Heart left ventricle (tissue), 16 donors: ENCODE measurements at regions of chr6 and their contacts with region 1.

Region 1: GRCh38 chr6:144013486-144013909 is 5.4 kb upstream of the PLAGL1 start:
- DNase-seq: peak; percentile 67 to 80 (median 72)
- ATAC-seq: peak in 3 of 4 donors; percentile 36 to 64 (median 54)
- H3K4me3 ChIP-seq: no peak overlapping the region
- H3K27ac ChIP-seq: no peak overlapping the region
- H3K4me1 ChIP-seq: peaks cover 0 to 7% (median 0%) of the 10 kb centered on the region in 12 donors
- H3K27me3 ChIP-seq: peaks cover 0 to 4% (median 0%) of the 10 kb centered on the region in 9 donors
- CTCF ChIP-seq: peak; percentile 87 to 98 (median 92)
- POLR2A ChIP-seq: no peak

Region 2: DNA sequence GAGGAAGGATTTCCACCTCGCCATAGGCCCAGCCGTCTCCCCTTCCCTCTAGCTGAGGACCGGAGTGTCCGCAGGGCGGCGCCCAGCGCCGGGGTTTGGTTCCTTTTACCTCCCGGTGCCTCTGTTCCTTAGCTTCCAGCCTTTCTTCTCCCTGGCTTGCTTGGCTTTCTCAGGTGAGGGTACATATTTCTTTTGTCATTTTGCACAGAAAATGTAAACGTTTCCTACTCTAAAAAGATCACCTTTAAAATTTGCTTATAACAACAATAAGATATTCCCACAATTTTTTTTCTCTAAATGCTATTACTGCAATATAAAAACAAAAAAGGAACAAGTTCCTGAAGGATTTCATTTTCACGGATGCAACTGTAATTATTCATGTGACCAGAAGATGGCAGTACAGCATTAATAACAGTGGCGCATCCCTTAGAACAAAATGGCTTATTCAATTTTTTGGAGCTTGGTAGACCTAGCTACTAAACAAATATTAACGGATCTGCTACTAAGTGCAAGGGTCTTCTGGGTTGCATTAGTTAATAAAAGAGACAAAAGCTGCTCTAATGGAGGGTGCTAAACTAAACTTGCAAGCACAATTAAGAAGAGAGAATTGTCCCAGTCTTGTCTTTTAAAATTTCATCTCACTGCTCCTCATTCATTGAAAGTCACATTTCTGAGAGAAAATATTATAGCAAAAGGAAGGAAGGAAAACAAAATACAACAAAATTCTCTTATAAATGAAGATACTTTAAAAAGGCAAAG is 1538.8 kb before region 1 on chr6:
- intact Hi-C with region 1: loop called in 2 of 10 experiments (anchors 10 kb)
- DNase-seq: peak in 1 of 5 donors; percentile 51
- ATAC-seq: no peak
- H3K4me3 ChIP-seq: no peak overlapping the region
- H3K27ac ChIP-seq: no peak overlapping the region
- H3K4me1 ChIP-seq: peaks cover 0 to 7% (median 0%) of the 10 kb centered on the region in 12 donors
- H3K27me3 ChIP-seq: peaks cover 0 to 2% (median 0%) of the 10 kb centered on the region in 9 donors
- CTCF ChIP-seq: peak; percentile 74 to 89 (median 80)
- POLR2A ChIP-seq: no peak

Region 3: DNA sequence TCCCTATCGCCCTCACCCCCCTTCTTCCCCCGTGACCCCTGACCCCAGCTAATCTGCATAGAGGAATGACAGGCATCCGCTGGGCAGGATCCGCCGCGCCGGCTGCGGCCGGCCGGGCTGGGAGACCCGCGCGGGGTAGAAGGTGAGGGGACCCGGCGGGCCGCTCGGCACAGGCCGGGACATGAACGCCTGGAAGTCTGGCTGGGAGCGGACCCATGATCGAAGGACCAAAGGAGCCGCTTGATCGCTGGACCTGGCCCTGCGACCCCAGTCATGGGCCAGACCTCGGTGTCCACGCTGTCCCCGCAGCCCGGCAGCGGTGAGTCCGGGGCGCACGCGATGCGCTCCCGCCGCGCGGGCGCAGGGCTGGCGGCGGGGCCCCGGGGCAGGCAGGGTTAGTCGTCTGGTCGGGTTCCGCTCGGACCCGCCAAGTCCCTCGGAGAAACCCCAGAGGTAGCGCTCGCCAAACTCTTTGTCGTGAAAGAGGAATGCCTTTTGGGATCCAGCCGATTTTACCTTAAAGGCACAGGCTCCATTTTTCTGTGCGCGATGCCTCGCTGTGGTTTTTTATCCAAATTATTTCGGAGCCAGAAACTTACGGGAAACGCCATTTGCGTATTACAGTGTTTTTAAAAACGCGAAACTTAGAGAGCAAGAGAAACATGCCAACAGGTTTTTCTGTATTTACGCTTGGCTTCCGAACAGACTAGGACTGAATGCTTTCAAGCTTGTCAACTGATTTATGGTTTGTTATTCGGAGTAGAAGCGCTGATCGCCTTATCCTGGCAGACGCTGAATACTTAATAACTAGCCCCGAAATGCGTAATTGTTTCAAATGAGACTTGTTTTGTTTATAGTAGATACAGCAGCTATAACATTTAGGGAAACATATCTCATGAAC is 335.4 kb before region 1 on chr6 and contains the start of gene PHACTR2:
- intact Hi-C with region 1: loop called in 1 of 10 experiments (anchors 5 kb)
- DNase-seq: peak; percentile 85 to 90 (median 87)
- ATAC-seq: peak; percentile 84 to 96 (median 91)
- H3K4me3 ChIP-seq: peak within 1 kb of the TSS; percentile 49 to 97 (median 80)
- H3K27ac ChIP-seq: peak within 1 kb of the TSS; percentile 94 to 99 (median 96)
- H3K4me1 ChIP-seq: peaks cover 0 to 64% (median 37%) of the 10 kb centered on the region in 12 donors
- H3K27me3 ChIP-seq: no peaks in the 10 kb centered on the region
- CTCF ChIP-seq: no peak
- POLR2A ChIP-seq: peak in 1 of 2 donors; percentile 82
- total RNA-seq, gene PHACTR2: 47.8 to 101 (median 68.3) TPM

Region 4: GRCh38 chr6:143940011-143940597 is 73.4 kb before region 1 on chr6:
- intact Hi-C with region 1: loop called in 9 of 10 experiments (anchors 1 to 5 kb)
- DNase-seq: no peak
- ATAC-seq: no peak
- H3K4me3 ChIP-seq: no peak overlapping the region
- H3K27ac ChIP-seq: peak overlapping the region in 1 of 12 donors; percentile 0
- H3K4me1 ChIP-seq: peaks cover 0 to 17% (median 0%) of the 10 kb centered on the region in 12 donors
- H3K27me3 ChIP-seq: no peaks in the 10 kb centered on the region
- CTCF ChIP-seq: peak; percentile 31 to 65 (median 52)
- POLR2A ChIP-seq: no peak

Region 5: GRCh38 chr6:143961886-143962873 is 51.3 kb before region 1 on chr6:
- intact Hi-C with region 1: loop called in 2 of 10 experiments (anchors 5 to 10 kb)
- DNase-seq: no peak
- ATAC-seq: peak in 2 of 4 donors; percentile 12 to 15
- H3K4me3 ChIP-seq: no peak overlapping the region
- H3K27ac ChIP-seq: peak overlapping the region in 10 of 12 donors; percentile 4 to 47 (median 27)
- H3K4me1 ChIP-seq: peaks cover 0 to 49% (median 25%) of the 10 kb centered on the region in 12 donors
- H3K27me3 ChIP-seq: no peaks in the 10 kb centered on the region
- CTCF ChIP-seq: peak in 8 of 12 donors; percentile 19 to 53 (median 40)
- POLR2A ChIP-seq: no peak

Region 6: DNA sequence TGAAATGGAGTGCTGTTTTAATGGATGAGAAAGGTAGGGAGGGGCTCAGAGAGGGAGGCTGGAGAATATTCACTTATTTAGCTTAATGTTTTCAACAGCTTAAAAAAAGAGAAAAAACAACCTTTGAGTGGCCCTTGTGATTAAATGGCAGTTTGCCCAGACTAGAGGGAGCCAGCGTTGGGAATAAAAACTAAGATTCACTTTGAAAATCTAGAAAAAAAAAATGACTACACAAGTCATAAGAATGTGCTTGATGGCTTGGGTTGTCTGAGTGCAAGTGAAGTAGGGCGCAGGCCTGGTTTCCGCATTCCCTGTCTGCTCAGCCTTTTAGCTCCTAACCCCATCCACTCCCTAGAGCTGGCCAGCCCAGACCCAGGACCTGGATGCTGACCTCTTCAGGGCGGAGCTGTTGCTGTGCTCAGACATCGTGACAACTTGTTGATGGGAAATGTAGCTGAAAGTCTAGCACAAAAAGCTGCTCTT is 300.5 kb after region 1 on chr6:
- intact Hi-C with region 1: no loop called
- DNase-seq: peak; percentile 73 to 76 (median 75)
- ATAC-seq: peak; percentile 87 to 94 (median 90)
- H3K4me3 ChIP-seq: no peak overlapping the region
- H3K27ac ChIP-seq: peak overlapping the region; percentile 27 to 75 (median 64)
- H3K4me1 ChIP-seq: peaks cover 14 to 81% (median 46%) of the 10 kb centered on the region in 12 donors
- H3K27me3 ChIP-seq: no peaks in the 10 kb centered on the region
- CTCF ChIP-seq: peak in 1 of 12 donors; percentile 24
- POLR2A ChIP-seq: no peak